ENCODE measurements at regions of chr16 and their contacts with region 1.

Region 1: DNA sequence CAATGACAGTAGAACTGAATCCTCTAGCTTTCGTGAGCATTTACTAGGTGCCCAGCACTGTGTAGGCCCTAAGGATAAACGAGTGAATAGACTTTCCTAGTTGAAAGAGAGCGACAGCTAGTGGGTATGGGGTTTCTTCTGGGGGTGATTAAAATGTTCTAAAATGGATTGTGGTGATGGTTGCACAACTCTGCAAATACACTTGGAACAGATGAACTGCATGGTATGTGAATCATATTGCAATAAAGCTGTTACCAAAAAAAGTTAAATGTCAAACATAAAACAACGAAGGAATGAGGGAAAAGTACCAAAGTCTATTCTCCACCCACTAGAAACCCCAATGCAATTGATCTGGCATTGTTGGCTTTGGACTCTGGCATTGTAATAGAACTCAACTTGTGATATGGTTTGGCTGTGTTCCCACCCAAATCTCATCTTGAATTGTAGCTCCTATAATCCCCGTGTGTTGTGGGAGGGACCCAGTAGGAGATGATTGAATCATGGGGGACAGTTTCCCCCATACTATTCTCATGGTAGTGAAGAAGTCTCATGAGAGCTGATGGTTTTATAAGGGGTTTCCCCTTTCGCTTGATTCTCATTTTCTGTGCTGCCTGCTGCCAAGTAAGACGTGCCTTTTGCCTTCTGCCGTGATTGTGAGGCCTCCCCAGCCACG is 70.5 kb downstream of the MARF1 start:
- DNase-seq: peak; percentile 83
- ATAC-seq: peak; percentile 16
- H3K4me3 ChIP-seq: no peak overlapping the region
- H3K27ac ChIP-seq: peak overlapping the region; percentile 20
- H3K4me1 ChIP-seq: peaks cover 62% of the 10 kb centered on the region
- H3K27me3 ChIP-seq: no peaks in the 10 kb centered on the region
- CTCF ChIP-seq: no peak
- EP300 ChIP-seq: peak in 1 of 2 experiments; percentile 72; a peak in 1 of 4 replicates
- POLR2A ChIP-seq: no peak
- RAD21 ChIP-seq: no peak

Region 2: GRCh38 chr16:15518390-15519351 is 53.8 kb before region 1 on chr16:
- CTCF ChIA-PET with region 1: no interaction called
- POLR2A ChIA-PET with region 1: no interaction called
- in situ Hi-C with region 1: no loop called
- intact Hi-C with region 1: no loop called
- DNase-seq: no peak
- ATAC-seq: peak; percentile 51
- H3K4me3 ChIP-seq: no peak overlapping the region
- H3K27ac ChIP-seq: no peak overlapping the region
- H3K4me1 ChIP-seq: peaks cover 26% of the 10 kb centered on the region
- H3K27me3 ChIP-seq: no peaks in the 10 kb centered on the region
- CTCF ChIP-seq: no peak
- EP300 ChIP-seq: no peak
- POLR2A ChIP-seq: no peak
- RAD21 ChIP-seq: no peak

Region 3: GRCh38 chr16:15548482-15548891 is 24.0 kb before region 1 on chr16:
- CTCF ChIA-PET with region 1: no interaction called
- POLR2A ChIA-PET with region 1: interaction called, 19 read pairs
- in situ Hi-C with region 1: no loop called
- intact Hi-C with region 1: no loop called
- DNase-seq: peak; percentile 45
- ATAC-seq: peak; percentile 73
- H3K4me3 ChIP-seq: no peak overlapping the region
- H3K27ac ChIP-seq: no peak overlapping the region
- H3K4me1 ChIP-seq: peaks cover 43% of the 10 kb centered on the region
- H3K27me3 ChIP-seq: no peaks in the 10 kb centered on the region
- CTCF ChIP-seq: no peak
- EP300 ChIP-seq: no peak
- POLR2A ChIP-seq: no peak
- RAD21 ChIP-seq: no peak

Region 4: DNA sequence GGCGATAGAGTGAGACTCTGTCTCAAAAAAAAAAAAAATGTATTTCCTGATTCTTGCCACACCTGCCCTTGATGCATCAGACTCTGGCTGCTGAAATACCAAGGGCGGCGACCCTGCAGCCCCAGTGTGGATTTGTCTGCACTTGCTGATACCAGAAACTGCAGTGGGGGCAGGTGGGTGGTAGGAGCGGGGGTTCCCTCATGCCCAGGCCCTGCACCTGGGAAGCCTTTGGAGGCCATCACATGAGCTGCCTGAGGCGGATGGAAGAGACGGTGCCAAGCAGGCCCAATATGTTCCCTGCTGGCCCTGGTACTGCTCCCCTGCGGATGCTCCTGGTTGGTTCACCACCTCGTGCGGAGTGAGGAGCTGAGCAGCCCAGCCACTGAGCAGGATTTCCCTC is 19.9 kb after region 1 on chr16:
- CTCF ChIA-PET with region 1: no interaction called
- POLR2A ChIA-PET with region 1: interaction called, 111 read pairs
- in situ Hi-C with region 1: no loop called
- intact Hi-C with region 1: no loop called
- DNase-seq: no peak
- ATAC-seq: no peak
- H3K4me3 ChIP-seq: no peak overlapping the region
- H3K27ac ChIP-seq: no peak overlapping the region
- H3K4me1 ChIP-seq: peaks cover 46% of the 10 kb centered on the region
- H3K27me3 ChIP-seq: no peaks in the 10 kb centered on the region
- CTCF ChIP-seq: no peak
- EP300 ChIP-seq: no peak
- POLR2A ChIP-seq: no peak
- RAD21 ChIP-seq: no peak

Region 5: GRCh38 chr16:15613676-15614075 is 41.2 kb after region 1 on chr16:
- CTCF ChIA-PET with region 1: no interaction called
- POLR2A ChIA-PET with region 1: interaction called, 57 read pairs
- in situ Hi-C with region 1: no loop called
- intact Hi-C with region 1: no loop called
- DNase-seq: no peak
- ATAC-seq: no peak
- H3K4me3 ChIP-seq: no peak overlapping the region
- H3K27ac ChIP-seq: no peak overlapping the region
- H3K4me1 ChIP-seq: peaks cover 72% of the 10 kb centered on the region
- H3K27me3 ChIP-seq: no peaks in the 10 kb centered on the region
- CTCF ChIP-seq: no peak
- EP300 ChIP-seq: no peak
- POLR2A ChIP-seq: no peak
- RAD21 ChIP-seq: no peak

Region 6: DNA sequence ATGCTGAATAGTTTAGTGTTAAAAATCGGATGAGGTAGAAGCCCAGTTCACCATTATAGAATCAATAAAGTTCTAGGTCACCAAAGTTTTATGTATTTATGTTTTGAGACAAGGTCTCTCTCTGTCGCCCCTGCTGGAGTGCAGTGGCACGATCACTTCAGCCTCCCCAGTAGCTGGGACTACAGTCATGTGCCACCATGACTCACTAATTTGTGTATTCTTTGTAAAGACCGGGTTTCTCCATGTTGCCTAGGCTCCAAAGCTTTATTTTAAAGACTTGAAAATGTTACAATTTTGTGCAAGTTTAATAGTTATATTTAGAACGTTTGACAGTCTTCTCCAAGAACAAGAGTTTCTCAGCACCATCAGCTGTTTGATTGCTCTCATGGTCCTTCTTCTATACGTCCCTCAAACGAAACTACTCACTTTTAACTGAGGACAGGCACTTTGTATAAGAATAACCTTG is 109.7 kb after region 1 on chr16:
- CTCF ChIA-PET with region 1: no interaction called
- POLR2A ChIA-PET with region 1: interaction called, 11 read pairs
- in situ Hi-C with region 1: no loop called
- intact Hi-C with region 1: no loop called
- DNase-seq: peak; percentile 89
- ATAC-seq: peak; percentile 96
- H3K4me3 ChIP-seq: no peak overlapping the region
- H3K27ac ChIP-seq: peak overlapping the region; percentile 53
- H3K4me1 ChIP-seq: peaks cover 14% of the 10 kb centered on the region
- H3K27me3 ChIP-seq: no peaks in the 10 kb centered on the region
- CTCF ChIP-seq: peak; percentile 61
- EP300 ChIP-seq: no peak
- POLR2A ChIP-seq: no peak
- RAD21 ChIP-seq: peak; percentile 48; the same call in 1 of the 2 replicates

Region 7: GRCh38 chr16:15777533-15778203 is 205.2 kb after region 1 on chr16:
- CTCF ChIA-PET with region 1: no interaction called
- POLR2A ChIA-PET with region 1: no interaction called
- in situ Hi-C with region 1: no loop called
- intact Hi-C with region 1: no loop called
- DNase-seq: peak; percentile 85
- ATAC-seq: peak; percentile 97
- H3K4me3 ChIP-seq: no peak overlapping the region
- H3K27ac ChIP-seq: no peak overlapping the region
- H3K4me1 ChIP-seq: peaks cover 11% of the 10 kb centered on the region; the same call in 1 of the 2 replicates
- H3K27me3 ChIP-seq: peaks cover 0 to 21% of the 10 kb centered on the region in 2 experiments; a peak in 3 of 5 replicates
- CTCF ChIP-seq: peak; percentile 91
- EP300 ChIP-seq: no peak
- POLR2A ChIP-seq: no peak
- RAD21 ChIP-seq: peak; percentile 91

Region 8: DNA sequence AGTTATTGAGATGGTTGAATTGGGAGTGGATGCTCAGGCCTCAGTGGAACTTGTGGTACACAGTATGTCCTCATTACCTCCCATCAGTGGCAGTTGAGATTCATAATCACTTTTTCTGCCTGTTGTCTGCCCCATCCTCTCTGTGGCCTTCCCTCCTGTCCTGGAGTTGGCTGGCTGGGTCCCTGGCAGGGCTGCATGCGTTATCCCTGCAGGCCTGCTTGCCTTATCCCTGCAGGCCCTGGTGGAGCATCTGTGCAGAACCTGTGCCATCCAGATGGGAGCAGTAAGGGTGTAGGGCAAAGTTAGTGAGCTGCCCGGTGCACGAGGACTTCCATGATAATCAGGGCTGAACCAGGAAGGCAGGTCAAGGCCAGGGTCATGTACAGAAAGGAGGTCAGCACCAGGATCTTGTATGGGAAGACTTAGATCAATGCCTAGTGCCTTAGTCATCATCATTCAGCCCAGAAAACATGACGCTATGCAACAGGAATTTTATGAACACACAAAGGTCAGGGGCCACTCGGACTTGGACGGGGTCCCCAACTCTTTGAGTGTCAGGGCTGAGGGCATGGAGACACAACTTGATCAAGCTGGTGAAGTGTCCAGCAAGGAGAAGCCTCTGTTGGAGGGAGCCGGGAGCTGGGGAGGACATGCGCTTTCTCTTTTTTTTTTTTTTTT is 424.1 kb after region 1 on chr16:
- CTCF ChIA-PET with region 1: no interaction called
- POLR2A ChIA-PET with region 1: no interaction called
- in situ Hi-C with region 1: no loop called
- intact Hi-C with region 1: no loop called
- DNase-seq: peak; percentile 99
- ATAC-seq: peak; percentile 85
- H3K4me3 ChIP-seq: 0 out of 6 replicates have a peak overlapping the region, but pooled peaks of 1 of the 3 experiments have one; percentile 1
- H3K27ac ChIP-seq: peak overlapping the region; percentile 7
- H3K4me1 ChIP-seq: peaks cover 41% of the 10 kb centered on the region
- H3K27me3 ChIP-seq: no peaks in the 10 kb centered on the region
- CTCF ChIP-seq: peak; percentile 72
- EP300 ChIP-seq: peak; percentile 64 to 86; a peak in 3 of 4 replicates
- POLR2A ChIP-seq: no peak
- RAD21 ChIP-seq: peak; percentile 79; the same call in 1 of the 2 replicates

Measured in HepG2 (cell line).